Mammary epithelial cell (primary cell): ENCODE measurements at regions of chr9 and their contacts with region 1.

Region 1: GRCh38 chr9:12915366-12915954 is 140.6 kb downstream of the LURAP1L start:
- DNase-seq: no peak
- H3K4me3 ChIP-seq: no peak overlapping the region
- H3K27ac ChIP-seq: no peak overlapping the region
- H3K4me1 ChIP-seq: no peaks in the 10 kb centered on the region
- H3K27me3 ChIP-seq: no peaks in the 10 kb centered on the region
- CTCF ChIP-seq: no peak

Region 2: DNA sequence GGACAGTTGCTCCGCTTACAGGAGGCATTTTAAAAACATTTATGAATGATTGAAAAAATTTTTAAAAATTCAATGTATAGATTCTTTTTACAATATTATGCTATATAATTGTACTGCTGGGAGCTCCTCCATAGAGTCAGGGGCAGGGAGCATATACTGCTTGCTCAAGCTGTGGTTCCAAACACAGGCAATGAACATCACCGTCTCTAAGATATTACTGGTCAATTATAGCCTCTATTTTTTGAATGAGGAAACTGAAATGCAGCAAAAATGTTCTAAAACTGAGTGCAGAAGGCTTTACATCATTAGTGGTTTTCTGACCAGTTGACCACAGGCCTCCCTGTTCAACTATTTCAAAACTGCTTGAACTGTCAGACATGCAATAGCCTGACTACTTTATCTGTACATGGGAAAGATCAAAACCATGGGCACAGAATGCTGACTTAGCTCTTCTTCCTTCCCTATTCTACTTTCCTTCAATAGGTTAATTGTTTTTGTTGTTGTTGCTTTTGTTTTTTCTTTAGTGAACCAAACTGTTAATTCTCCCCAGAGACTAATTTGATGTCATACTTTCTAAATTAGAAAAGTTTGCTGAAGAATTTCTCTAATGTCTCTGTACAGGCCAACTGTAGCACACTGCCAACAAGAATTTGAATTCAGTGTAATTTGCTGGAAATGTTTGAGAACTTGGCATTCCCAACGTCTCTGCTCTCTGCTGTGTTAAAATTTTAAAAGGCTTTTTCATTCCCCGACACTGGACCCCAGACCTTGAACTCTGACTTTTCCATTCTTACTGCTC is 471.7 kb after region 1 on chr9:
- CTCF ChIA-PET with region 1: interaction called, 11 read pairs
- dilution Hi-C with region 1: no loop called
- in situ Hi-C with region 1: no loop called
- intact Hi-C with region 1: no loop called
- DNase-seq: no peak
- H3K4me3 ChIP-seq: no peak overlapping the region
- H3K27ac ChIP-seq: no peak overlapping the region
- H3K4me1 ChIP-seq: no peaks in the 10 kb centered on the region
- H3K27me3 ChIP-seq: no peaks in the 10 kb centered on the region
- CTCF ChIP-seq: no peak